Activated T-helper 1 cell treated with anti-CD3 and anti-CD28 coated beads, Interleukin-12 subunit alpha, Interleukin-12 subunit beta, Interleukin-2, Interleukin-4 antibody, amounts not matched to agents 30 ng/mL and 10 ng/mL and 1 ng/mL, durations not matched to agents 14 hours and 24 hours and 36 hours (primary cell): ENCODE measurements at regions of chr21 and their contacts with region 1.

Region 1: DNA sequence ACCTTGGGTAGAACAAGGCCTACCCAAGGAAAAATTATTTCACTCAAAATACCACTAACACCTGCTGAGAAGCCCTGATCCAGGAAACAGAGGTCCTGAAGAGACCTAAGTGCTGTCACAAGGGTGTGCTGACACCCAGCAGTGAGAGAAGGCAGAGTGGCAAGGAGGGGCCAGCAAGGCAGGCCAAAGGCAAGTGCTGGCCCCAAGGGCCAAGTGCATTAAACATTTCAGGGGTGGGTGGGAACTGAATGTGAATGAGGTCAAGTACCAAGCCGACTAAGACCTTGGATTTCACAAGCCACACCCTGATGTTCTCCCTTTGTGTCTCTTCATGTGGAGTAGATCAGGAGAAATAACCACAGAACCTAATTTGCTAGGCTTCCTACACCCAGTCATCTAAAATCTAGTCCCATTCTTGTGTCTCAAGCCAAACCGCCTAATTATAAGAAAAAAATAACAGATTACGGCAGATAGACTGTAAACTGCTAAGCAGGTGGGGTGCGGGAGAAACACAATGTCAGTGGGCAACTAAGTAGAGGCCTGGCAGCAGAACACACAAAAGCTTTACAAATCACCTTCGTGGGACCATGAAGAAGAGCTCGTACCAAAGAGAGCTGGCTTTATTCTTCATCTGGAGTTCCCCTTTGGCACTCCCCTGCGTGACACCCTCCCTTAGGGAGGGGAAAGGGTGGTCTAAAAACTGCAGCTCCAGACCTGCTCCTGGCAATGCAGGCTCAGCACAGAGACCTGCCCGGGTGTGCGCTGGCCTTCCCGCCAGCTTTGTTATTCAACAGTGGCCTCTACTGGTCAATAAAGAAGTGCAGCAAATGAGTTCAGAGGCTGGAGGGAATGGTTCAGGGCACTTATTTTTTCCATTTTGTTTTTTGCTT is 8.7 kb downstream of the UBE2G2 start:
- DNase-seq: peak; percentile 45
- H3K4me3 Mint-ChIP-seq: no peak overlapping the region
- H3K27ac Mint-ChIP-seq: peak overlapping the region; percentile 10
- H3K4me1 Mint-ChIP-seq: peaks cover 41% of the 10 kb centered on the region
- H3K27me3 Mint-ChIP-seq: no peaks in the 10 kb centered on the region

Region 2: GRCh38 chr21:44742418-44743153 is 50.4 kb before region 1 on chr21:
- intact Hi-C with region 1: loop called (anchors 5 kb)
- DNase-seq: no peak
- H3K4me3 Mint-ChIP-seq: no peak overlapping the region
- H3K27ac Mint-ChIP-seq: no peak overlapping the region
- H3K4me1 Mint-ChIP-seq: no peaks in the 10 kb centered on the region
- H3K27me3 Mint-ChIP-seq: peaks cover 12% of the 10 kb centered on the region

Region 3: DNA sequence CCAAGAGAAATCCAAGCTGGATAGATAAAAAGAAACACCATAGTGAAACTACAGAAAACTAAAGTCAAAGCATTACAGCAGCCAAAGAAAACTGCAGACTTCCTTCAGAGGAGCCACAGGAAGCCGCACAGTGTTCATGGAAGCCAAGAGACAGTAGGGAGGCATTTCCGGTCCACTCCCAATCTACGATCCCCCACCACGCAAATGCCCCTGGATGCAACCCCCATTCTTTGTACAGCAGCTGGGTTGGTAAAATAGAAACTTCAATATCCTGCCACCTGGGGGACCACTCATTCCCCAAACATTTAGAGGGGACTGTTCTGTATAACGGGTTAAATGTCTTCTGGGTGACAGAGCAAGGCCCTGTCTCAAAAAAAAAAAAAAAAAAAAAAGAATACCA is 37.7 kb before region 1 on chr21:
- intact Hi-C with region 1: loop called (anchors 1 kb)
- DNase-seq: no peak
- H3K4me3 Mint-ChIP-seq: no peak overlapping the region
- H3K27ac Mint-ChIP-seq: no peak overlapping the region
- H3K4me1 Mint-ChIP-seq: no peaks in the 10 kb centered on the region
- H3K27me3 Mint-ChIP-seq: peaks cover 4% of the 10 kb centered on the region

Region 4: DNA sequence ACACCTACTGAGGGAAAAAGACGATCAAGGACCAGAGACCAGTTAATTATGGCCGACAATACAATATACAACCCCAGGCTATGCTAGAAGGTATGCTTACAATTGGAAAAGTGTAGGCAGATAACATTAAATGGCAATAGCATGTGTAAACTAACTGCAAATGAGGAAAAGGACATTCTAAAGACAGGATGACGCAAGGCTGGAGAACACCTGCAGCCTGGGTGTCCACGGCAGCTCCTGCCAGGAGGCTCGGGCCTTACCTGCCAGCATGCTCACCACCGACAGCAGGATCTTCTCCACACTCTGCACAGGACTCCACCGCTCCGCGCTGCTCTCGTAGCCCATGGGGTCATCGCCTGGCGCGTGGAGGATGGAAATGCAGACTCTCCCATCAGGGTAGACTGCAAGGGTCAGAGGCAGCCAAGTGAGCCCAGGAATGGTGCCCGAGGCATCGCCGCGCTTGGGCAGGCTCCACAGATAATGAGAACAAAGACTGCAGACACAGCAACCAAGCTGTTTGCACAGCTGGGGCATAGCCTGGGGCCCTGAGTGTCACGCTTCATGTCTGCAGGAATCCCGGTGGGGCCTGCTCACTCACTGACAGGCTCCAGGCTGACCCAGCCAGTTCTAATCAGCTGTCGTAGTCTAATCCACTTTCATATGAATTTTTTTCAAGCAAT is 19.5 kb before region 1 on chr21:
- intact Hi-C with region 1: no loop called
- DNase-seq: no peak
- H3K4me3 Mint-ChIP-seq: no peak overlapping the region
- H3K27ac Mint-ChIP-seq: no peak overlapping the region
- H3K4me1 Mint-ChIP-seq: peaks cover 6% of the 10 kb centered on the region
- H3K27me3 Mint-ChIP-seq: no peaks in the 10 kb centered on the region

Region 5: DNA sequence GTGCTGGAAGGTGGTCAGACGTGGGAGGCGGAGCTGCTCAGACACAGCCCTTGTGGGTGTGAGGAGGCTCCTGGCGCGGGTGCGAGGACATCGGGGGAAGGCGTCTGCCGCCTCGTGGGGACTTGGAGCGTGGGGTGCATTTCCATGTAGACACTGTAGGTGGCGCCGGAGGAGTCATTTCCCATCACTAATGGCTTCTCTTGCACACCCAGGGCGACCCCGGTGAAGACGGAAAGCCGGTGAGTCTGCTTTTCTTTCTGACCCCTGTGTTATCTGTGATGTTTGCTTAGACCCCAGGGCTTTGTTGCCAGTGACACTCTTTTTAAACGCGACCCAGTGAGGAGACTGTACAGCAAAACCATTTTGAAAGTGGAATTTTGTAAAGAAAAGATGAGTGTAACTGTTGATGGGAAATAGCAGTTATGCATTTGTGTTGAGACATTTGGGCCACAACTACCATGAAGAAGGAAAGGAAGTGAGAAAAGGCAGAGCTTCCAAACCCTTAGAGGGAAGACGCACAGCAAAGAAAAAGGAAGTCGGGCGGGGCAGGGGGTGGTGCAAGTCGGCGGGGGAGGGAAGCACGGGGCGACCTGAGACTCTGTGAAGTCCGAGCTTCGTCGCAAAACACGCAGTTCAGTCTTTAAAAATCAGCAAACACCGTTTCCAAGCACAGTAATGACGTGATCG is 685.3 kb after region 1 on chr21:
- intact Hi-C with region 1: no loop called
- DNase-seq: peak; percentile 68
- H3K4me3 Mint-ChIP-seq: peak overlapping the region; percentile 92
- H3K27ac Mint-ChIP-seq: peak overlapping the region; percentile 99
- H3K4me1 Mint-ChIP-seq: peaks cover 32% of the 10 kb centered on the region
- H3K27me3 Mint-ChIP-seq: no peaks in the 10 kb centered on the region